Activated CD4-positive, alpha-beta memory T cell treated with anti-CD3 and anti-CD28 coated beads for 36 hours (primary cell): ENCODE measurements at regions of chr11 and their contacts with region 1.

Region 1: DNA sequence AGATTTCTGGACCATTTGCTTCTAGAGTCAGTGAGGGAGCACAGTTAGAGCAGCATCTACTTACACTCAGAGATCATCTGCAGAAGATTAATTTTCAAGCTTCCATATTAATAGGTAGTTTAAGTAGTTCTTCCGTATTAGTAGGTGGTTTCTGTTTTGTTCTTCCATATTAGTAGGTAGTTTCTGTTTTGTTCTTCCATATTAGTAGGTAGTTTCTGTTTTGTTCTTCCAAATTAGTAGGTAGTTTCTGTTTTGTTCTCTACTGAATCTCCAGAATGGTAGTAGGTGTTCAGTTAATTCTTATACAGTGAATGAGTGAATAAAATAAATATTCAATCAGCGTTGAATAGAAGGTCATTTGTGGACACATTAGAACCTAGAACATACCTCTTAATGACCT is 175.7 kb downstream of the TMEM135 start:
- DNase-seq: no peak
- H3K4me3 Mint-ChIP-seq: no peak overlapping the region
- H3K27ac Mint-ChIP-seq: no peak overlapping the region
- H3K4me1 Mint-ChIP-seq: peaks cover 16% of the 10 kb centered on the region
- H3K27me3 Mint-ChIP-seq: no peaks in the 10 kb centered on the region

Region 2: GRCh38 chr11:87081358-87081757 is 132.1 kb before region 1 on chr11:
- CTCF ChIA-PET with region 1: no interaction called
- POLR2A ChIA-PET with region 1: no interaction called
- intact Hi-C with region 1: loop called (anchors 1 kb)
- DNase-seq: no peak
- H3K4me3 Mint-ChIP-seq: peak overlapping the region; percentile 67
- H3K27ac Mint-ChIP-seq: peak overlapping the region; percentile 74
- H3K4me1 Mint-ChIP-seq: peaks cover 21% of the 10 kb centered on the region
- H3K27me3 Mint-ChIP-seq: no peaks in the 10 kb centered on the region

Region 3: DNA sequence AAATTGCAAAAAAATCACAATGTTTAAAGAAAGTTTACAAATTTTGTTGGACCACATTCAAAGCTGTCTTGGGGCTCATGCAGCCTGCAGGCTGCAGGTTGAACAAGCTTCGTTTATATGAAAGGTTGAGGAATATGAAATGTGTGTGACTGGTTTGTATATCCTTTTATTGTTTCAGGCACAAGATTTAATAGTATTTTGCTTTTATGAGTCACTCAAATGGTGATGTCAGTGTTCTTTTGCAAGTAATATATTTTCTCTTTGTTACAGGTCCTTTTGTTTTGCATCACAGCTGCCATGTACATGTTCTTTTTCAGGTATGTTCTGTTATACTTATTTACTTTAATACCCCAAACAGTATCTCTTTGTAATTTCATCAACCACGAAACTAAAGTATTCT is 22.9 kb after region 1 on chr11:
- CTCF ChIA-PET with region 1: no interaction called
- POLR2A ChIA-PET with region 1: no interaction called
- intact Hi-C with region 1: no loop called
- DNase-seq: no peak
- H3K4me3 Mint-ChIP-seq: no peak overlapping the region
- H3K27ac Mint-ChIP-seq: no peak overlapping the region
- H3K4me1 Mint-ChIP-seq: no peaks in the 10 kb centered on the region
- H3K27me3 Mint-ChIP-seq: no peaks in the 10 kb centered on the region

Region 4: DNA sequence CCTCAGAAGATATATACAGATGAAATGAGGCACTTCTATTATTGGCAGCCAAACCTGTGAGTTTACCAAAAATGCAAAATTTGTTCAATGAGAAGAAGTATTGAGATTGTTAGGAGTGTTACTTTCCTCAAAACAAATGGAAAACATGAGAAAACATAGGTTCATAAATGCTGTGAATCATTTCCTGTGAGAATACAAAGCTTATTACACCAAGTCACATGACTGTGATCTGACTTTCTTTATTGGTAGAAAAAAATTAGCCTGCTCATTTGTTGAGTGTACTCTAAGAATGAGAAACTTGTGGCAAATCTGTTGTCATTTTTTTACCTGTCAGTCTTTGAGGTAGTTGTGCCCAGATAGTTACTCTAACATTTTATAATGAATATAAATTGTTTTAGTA is 39.4 kb after region 1 on chr11:
- CTCF ChIA-PET with region 1: no interaction called
- POLR2A ChIA-PET with region 1: no interaction called
- intact Hi-C with region 1: loop called (anchors 2 kb)
- DNase-seq: no peak
- H3K4me3 Mint-ChIP-seq: no peak overlapping the region
- H3K27ac Mint-ChIP-seq: no peak overlapping the region
- H3K4me1 Mint-ChIP-seq: peaks cover 13% of the 10 kb centered on the region
- H3K27me3 Mint-ChIP-seq: no peaks in the 10 kb centered on the region